ENCODE measurements at regions of chr10 and their contacts with region 1.

Region 1: GRCh38 chr10:88687853-88688467 is 18.1 kb upstream of the LIPK start:
- DNase-seq: no peak
- H3K4me3 ChIP-seq: no peak overlapping the region
- CTCF ChIP-seq: peak; percentile 55

Region 2: GRCh38 chr10:88565072-88565471 is 122.9 kb before region 1 on chr10:
- CTCF ChIA-PET with region 1: interaction called, 15 read pairs
- POLR2A ChIA-PET with region 1: no interaction called
- DNase-seq: no peak
- H3K4me3 ChIP-seq: no peak overlapping the region
- CTCF ChIP-seq: peak; percentile 14

Region 3: GRCh38 chr10:88676283-88677060 is 11.5 kb before region 1 on chr10:
- CTCF ChIA-PET with region 1: interaction called, 55 read pairs
- POLR2A ChIA-PET with region 1: no interaction called
- DNase-seq: no peak
- H3K4me3 ChIP-seq: no peak overlapping the region
- CTCF ChIP-seq: no peak

Region 4: DNA sequence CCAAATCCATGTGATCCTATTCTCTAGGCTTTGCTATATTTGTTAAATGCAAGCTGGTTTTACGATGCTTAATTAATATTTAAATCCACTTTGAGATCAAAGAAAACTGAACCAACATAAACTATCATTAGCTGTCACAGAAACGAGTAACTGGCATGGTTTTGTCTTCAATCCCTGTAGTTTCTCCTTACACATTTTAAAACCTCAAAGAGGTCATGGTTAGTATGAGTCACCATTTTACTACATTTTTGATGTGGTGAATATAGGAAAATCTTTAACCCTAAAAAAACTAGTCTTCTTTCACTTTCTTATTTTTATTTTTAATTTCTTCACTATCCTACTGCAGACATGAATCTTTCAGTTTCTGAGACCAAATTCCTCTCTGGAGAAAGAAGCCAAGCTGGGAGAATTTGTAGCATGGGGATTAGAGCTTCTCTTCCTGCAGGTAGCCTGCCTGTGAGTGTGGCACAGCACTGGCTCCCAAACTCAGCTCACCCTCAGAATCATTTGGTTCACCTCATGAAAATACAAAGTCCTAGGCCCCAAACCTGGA is 105.9 kb after region 1 on chr10:
- CTCF ChIA-PET with region 1: interaction called, 18 read pairs
- POLR2A ChIA-PET with region 1: no interaction called
- DNase-seq: no peak
- H3K4me3 ChIP-seq: no peak overlapping the region
- CTCF ChIP-seq: no peak

Region 5: DNA sequence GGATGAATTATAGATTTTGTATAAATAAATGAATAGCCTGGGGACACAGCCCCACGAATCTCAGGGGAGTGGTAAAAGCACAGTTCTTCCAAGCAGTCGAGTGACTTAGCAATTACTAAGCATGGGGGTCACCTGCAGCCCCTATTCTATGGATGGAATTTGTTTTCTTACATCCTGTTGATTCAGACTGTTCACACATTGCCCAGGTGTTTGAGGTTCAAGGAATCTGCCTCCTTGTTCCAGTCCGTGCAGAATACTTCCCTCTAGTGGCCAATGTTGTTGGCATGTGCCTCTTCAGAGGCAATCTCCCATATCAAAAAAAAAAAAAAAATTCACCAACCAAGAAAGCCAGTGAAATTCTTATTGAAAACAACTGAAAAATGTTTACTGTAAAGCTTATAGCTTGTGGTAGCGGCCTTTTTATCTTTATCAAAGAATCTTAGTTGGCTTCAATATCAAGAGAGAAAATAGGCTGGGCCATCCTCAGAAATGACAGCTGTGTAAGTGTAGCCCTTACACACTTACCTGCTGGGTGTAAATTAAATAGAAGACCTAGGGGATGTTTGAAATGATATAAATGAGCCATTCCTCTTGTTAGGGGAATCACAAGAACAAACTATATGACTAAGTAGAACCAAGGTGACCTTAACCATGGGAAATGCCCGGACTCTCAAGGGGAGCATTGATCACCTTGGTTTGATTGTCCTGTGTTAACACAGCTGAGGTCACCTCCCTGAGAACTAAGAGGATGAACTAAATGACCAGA is 122.4 kb after region 1 on chr10:
- CTCF ChIA-PET with region 1: interaction called, 57 read pairs
- POLR2A ChIA-PET with region 1: no interaction called
- DNase-seq: no peak
- H3K4me3 ChIP-seq: no peak overlapping the region
- CTCF ChIP-seq: peak; percentile 61

Region 6: GRCh38 chr10:88848499-88848898 is 160.5 kb after region 1 on chr10:
- CTCF ChIA-PET with region 1: no interaction called
- POLR2A ChIA-PET with region 1: no interaction called
- DNase-seq: no peak
- H3K4me3 ChIP-seq: no peak overlapping the region
- CTCF ChIP-seq: no peak

Region 7: DNA sequence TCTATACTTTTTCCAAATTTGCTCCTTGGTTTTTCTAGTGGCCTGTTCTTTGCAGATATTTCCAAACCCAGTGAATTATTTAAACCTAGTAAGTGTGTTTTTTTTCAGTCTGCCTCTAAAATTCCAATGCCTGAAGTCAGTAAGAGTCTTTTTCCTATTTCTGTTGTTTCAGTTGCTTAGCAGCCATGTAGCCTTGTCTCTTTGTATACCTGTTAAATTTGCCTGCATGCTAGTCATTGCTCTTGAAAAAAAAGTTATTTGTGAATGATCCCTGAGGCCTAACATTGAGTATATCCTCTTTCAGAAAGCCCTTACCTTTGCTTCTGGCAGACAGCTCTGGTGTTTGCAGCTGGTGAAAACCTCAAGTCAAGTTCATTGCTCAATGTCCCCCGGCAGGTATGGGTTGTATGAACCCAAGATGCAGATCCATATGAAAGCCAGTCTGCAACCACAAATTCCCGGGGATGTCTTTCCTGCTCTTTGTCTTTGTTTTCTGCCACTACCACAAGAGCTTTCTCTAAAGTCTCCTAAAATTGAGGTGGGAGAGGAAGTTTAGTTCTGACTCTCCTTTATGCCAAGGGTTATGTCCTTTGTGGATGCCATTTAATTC is 483.4 kb after region 1 on chr10:
- CTCF ChIA-PET with region 1: no interaction called
- POLR2A ChIA-PET with region 1: no interaction called
- DNase-seq: no peak
- H3K4me3 ChIP-seq: no peak overlapping the region
- CTCF ChIP-seq: no peak